ENCODE measurements at regions of chr3 and their contacts with region 1.

Region 1: GRCh38 chr3:122942937-122943827 is 84.4 kb downstream of the SEMA5B start:
- DNase-seq: peak; percentile 84

Region 2: DNA sequence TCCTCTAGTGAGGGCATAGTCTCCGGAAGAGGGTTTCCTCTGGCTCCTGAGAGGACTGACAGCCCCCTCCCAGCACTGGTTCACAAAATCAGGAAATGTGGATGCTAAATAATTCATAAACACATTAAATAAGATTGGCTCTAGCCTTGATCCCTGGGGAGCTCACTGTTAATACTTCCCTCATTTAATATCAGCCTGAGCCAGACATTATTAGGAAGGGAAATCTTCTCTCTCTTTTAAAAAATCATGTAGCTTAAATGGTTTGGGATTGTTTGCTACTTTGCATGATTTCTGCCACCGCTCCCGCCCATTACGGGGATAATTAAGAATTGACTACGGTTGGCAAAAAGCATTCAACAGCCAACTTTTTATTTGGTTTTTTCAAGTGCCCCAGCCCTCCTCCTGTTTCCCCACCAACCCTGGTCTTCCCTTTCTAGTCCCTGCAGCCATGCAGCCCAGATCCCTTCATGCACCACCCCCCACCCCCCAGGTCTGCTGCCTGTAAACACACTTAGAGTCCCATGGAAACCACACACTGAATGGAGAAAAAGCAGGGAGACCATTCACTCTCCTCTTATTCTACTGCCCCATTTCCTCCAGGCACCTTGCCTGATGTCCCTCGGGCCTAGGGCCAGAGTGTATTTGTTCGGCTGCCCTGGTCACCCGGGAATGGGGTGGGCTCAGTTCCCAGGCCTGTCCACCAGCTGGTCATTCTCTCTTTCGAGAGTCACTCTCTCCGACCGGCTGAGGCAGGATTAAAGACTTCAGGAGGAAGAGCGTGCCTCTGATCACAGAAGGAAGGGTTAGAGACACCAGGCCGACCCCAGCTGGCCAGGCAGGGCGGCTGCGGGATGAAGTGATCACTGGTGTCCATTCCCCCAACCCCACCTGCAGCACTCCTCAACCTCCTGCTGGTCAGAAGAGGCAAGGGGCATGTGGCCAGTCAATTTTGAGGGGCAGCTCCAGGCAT is 39.3 kb after region 1 on chr3:
- intact Hi-C with region 1: loop called (anchors 5 kb)
- DNase-seq: no peak

Region 3: DNA sequence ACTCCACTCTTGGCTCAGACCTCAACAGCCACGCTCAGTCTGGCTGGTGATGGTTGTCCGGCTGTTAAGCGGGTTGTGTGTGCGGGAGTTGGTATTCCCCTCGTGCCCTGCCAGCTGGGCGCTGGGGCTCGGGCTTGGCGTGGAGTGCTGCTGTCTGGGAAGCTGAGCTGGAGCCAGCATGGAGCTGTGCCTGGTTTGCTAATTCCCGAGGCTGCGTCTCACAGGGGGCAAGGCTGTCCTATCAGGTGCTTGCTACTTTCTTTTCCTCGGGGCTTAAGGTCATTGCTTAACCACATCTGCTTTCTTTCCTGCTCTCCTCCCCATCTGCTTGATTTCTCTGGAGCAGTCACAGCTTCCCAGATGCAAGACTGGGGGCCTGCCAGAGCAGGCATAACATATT is 153.5 kb after region 1 on chr3:
- intact Hi-C with region 1: loop called (anchors 5 kb)
- DNase-seq: peak; percentile 89

Region 4: GRCh38 chr3:123258811-123259420 is 315.7 kb after region 1 on chr3:
- intact Hi-C with region 1: loop called (anchors 2 kb)
- DNase-seq: no peak

Measured in cardiac septum (tissue), 1 donor.